ENCODE measurements at regions of chrX and their contacts with region 1.

Region 1: DNA sequence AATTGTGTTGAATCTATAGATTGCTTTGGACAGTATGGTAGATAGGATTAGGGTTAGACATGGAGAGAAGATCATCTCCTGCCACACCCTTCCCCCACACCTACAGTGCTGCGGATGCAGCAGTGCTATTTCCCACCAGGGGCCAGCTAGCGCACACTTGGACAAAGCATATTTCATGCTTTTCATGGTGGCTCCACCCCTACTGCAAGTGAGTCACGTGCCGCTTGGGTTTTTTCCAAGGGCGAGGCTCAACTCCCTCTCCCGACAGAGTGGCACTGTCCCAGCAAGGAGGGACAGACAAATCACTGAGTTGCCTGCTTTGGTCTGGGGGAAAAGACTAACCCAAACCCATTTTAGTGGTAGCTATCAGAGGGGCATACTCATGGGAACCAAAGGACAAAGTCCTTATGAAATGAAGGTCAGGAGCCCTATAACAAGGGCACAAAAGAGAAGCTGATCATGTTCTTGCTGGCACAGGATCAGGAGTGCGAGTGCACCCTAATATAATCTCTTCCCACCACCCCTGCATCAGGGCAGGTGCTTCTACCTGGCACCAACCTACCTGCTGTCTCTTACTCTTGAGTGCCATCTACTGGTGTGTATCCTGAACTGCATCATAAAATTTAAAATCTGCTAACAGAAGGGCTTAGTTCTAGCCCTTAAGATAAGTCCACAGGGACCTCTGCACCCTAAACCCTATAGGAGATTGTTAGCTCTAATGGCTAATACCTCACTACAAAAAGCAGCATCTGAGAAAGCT is 55.1 kb upstream of the PGAM4 start:
- DNase-seq: no peak
- ATAC-seq: peak; percentile 65
- H3K4me3 Mint-ChIP-seq: no peak overlapping the region
- H3K27ac Mint-ChIP-seq: no peak overlapping the region
- H3K4me1 Mint-ChIP-seq: peaks cover 3% of the 10 kb centered on the region
- H3K27me3 Mint-ChIP-seq: no peaks in the 10 kb centered on the region
- CTCF ChIP-seq: peak; percentile 47

Region 2: DNA sequence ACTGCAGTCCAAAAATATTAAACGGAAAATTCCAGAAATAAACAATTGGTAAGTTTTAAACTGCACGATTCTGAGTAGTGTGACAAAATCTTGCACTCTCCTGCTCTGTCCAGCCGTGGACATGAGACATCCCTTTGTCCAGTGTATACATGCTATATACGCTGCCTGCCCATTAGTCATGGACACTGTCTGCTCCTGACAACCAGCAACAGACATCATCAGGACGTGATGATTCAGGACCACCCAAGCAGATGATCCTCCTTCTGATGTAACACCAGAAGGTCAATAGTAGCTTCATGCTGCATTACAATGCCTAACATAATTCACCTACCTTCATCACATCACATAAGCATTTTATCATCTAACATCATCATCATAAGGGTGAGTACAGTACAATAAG is 274.8 kb before region 1 on chrX:
- CTCF ChIA-PET with region 1: no interaction called
- POLR2A ChIA-PET with region 1: no interaction called
- intact Hi-C with region 1: no loop called
- DNase-seq: no peak
- ATAC-seq: no peak
- H3K4me3 Mint-ChIP-seq: no peak overlapping the region
- H3K27ac Mint-ChIP-seq: no peak overlapping the region
- H3K4me1 Mint-ChIP-seq: peaks cover 19% of the 10 kb centered on the region
- H3K27me3 Mint-ChIP-seq: no peaks in the 10 kb centered on the region
- CTCF ChIP-seq: no peak

Region 3: GRCh38 chrX:77899081-77899828 is 125.3 kb before region 1 on chrX and contains the start of gene COX7B:
- CTCF ChIA-PET with region 1: interaction called, 16 read pairs
- POLR2A ChIA-PET with region 1: no interaction called
- intact Hi-C with region 1: no loop called
- DNase-seq: peak; percentile 73
- ATAC-seq: peak; percentile 74
- H3K4me3 Mint-ChIP-seq: peak within 1 kb of the TSS; percentile 94
- H3K27ac Mint-ChIP-seq: peak within 1 kb of the TSS; percentile 97
- H3K4me1 Mint-ChIP-seq: peaks cover 18% of the 10 kb centered on the region
- H3K27me3 Mint-ChIP-seq: no peaks in the 10 kb centered on the region
- CTCF ChIP-seq: peak; percentile 38
- total RNA-seq, gene COX7B: 302 to 324 TPM

Region 4: GRCh38 chrX:77910108-77910840 is 114.3 kb before region 1 on chrX and contains the start of gene ATP7A:
- CTCF ChIA-PET with region 1: interaction called, 17 read pairs
- POLR2A ChIA-PET with region 1: interaction called, 4 read pairs
- intact Hi-C with region 1: loop called (anchors 5 kb)
- DNase-seq: peak; percentile 95
- ATAC-seq: peak; percentile 93
- H3K4me3 Mint-ChIP-seq: peak within 1 kb of the TSS; percentile 83
- H3K27ac Mint-ChIP-seq: peak within 1 kb of the TSS; percentile 98
- H3K4me1 Mint-ChIP-seq: peaks cover 15% of the 10 kb centered on the region
- H3K27me3 Mint-ChIP-seq: no peaks in the 10 kb centered on the region
- CTCF ChIP-seq: no peak
- total RNA-seq, gene ATP7A: 7.4 to 8.7 TPM

Region 5: DNA sequence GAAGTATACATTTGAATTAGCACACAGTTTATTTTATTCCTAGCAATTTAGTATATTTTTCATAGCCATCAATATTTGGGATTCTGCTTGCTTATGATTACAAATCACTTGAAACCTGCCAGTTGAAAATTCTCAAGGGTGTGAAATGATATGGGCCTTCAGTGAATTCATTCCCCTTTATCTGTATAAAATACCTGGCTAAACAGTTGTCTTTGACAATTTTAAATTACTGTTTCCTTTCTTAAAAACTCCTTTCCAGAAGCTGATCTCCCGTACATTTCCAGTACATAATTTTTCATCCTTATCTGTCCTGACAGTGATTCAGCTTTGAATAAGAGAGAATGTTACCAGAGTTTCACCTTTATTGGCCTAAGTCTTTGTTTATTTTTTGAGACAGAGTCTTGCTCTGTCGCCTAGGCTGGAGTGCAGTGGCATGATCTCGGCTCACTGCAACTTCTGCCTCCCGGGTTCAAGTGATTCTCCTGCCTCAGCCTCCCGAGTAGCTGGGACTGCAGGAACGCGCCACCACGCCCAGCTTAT is 100.1 kb before region 1 on chrX:
- CTCF ChIA-PET with region 1: interaction called, 10 read pairs
- POLR2A ChIA-PET with region 1: no interaction called
- intact Hi-C with region 1: no loop called
- DNase-seq: no peak
- ATAC-seq: no peak
- H3K4me3 Mint-ChIP-seq: no peak overlapping the region
- H3K27ac Mint-ChIP-seq: no peak overlapping the region
- H3K4me1 Mint-ChIP-seq: peaks cover 9% of the 10 kb centered on the region
- H3K27me3 Mint-ChIP-seq: no peaks in the 10 kb centered on the region
- CTCF ChIP-seq: no peak

Region 6: DNA sequence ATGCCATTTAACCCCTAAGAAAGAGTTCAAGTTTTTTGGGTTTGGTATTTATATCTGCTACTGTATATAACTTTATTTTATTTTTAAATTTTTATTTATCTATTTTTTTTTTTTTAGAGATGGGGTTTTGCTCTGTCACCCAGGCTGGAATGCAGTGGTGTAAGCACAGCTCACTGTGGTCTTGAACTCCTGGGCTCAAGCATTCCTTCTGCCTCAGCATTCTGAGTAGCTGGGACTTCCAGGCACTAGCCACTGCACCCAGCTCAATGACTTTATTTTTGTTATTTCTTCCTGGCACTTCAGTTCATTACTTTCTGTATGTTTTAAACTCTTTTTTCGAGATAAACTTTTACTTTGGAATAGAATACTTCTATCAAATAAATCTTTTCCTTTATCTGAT is 12.7 kb before region 1 on chrX:
- CTCF ChIA-PET with region 1: interaction called, 18 read pairs
- POLR2A ChIA-PET with region 1: no interaction called
- intact Hi-C with region 1: no loop called
- DNase-seq: no peak
- ATAC-seq: no peak
- H3K4me3 Mint-ChIP-seq: no peak overlapping the region
- H3K27ac Mint-ChIP-seq: no peak overlapping the region
- H3K4me1 Mint-ChIP-seq: no peaks in the 10 kb centered on the region
- H3K27me3 Mint-ChIP-seq: no peaks in the 10 kb centered on the region
- CTCF ChIP-seq: no peak

Region 7: GRCh38 chrX:78092296-78092695 is 67.8 kb after region 1 on chrX:
- CTCF ChIA-PET with region 1: interaction called, 12 read pairs
- POLR2A ChIA-PET with region 1: no interaction called
- intact Hi-C with region 1: no loop called
- DNase-seq: peak; percentile 34
- ATAC-seq: peak; percentile 91
- H3K4me3 Mint-ChIP-seq: no peak overlapping the region
- H3K27ac Mint-ChIP-seq: peak overlapping the region; percentile 70
- H3K4me1 Mint-ChIP-seq: peaks cover 9% of the 10 kb centered on the region
- H3K27me3 Mint-ChIP-seq: no peaks in the 10 kb centered on the region
- CTCF ChIP-seq: peak; percentile 64

Region 8: DNA sequence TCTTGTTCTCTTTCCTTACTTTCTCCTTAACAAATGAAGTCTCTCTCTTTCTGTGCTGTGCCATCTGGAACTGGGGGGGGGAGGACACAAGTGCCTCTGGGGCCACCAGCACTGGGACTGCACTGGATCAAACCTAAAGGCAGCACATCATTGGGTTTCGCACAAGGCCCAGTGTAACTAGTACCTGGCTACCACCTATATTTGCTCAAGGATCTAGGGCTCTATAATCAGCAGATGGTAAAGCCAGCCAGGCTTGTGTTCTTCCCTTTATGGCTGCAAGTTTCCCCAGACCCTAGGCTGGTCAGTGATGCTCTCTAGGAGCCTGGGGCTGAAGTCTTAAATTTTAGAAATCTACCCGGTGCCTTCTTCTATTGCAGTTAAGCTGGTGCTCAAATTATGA is 594.5 kb after region 1 on chrX:
- CTCF ChIA-PET with region 1: no interaction called
- POLR2A ChIA-PET with region 1: no interaction called
- intact Hi-C with region 1: no loop called
- DNase-seq: no peak
- ATAC-seq: no peak
- H3K4me3 Mint-ChIP-seq: no peak overlapping the region
- H3K27ac Mint-ChIP-seq: no peak overlapping the region
- H3K4me1 Mint-ChIP-seq: no peaks in the 10 kb centered on the region
- H3K27me3 Mint-ChIP-seq: no peaks in the 10 kb centered on the region
- CTCF ChIP-seq: no peak